Ovary (tissue), 10 donors: ENCODE measurements at regions of chr6 and their contacts with region 1.

Region 1: GRCh38 chr6:66662196-66662595 is 955.2 kb upstream of the EYS start:
- DNase-seq: no peak
- H3K4me3 ChIP-seq: no peak overlapping the region
- H3K27ac ChIP-seq: no peak overlapping the region
- H3K4me1 ChIP-seq: no peaks in the 10 kb centered on the region
- H3K27me3 ChIP-seq: no peaks in the 10 kb centered on the region
- CTCF ChIP-seq: no peak
- EP300 ChIP-seq: no peak
- POLR2A ChIP-seq: no peak

Region 2: GRCh38 chr6:66675906-66676305 is 13.7 kb after region 1 on chr6:
- intact Hi-C with region 1: loop called in 1 of 4 experiments (anchors 2 kb)
- DNase-seq: no peak
- H3K4me3 ChIP-seq: no peak overlapping the region
- H3K27ac ChIP-seq: no peak overlapping the region
- H3K4me1 ChIP-seq: no peaks in the 10 kb centered on the region
- H3K27me3 ChIP-seq: no peaks in the 10 kb centered on the region
- CTCF ChIP-seq: no peak
- EP300 ChIP-seq: no peak
- POLR2A ChIP-seq: no peak